Left cardiac atrium (tissue), 4 donors: ENCODE measurements at regions of chr20 and their contacts with region 1.

Region 1: GRCh38 chr20:63009045-63009961 is 2.5 kb upstream of the BHLHE23 start:
- DNase-seq: peak; percentile 77
- ATAC-seq: peak; percentile 87 to 90

Region 2: GRCh38 chr20:62873280-62873679 is 136.0 kb before region 1 on chr20:
- intact Hi-C with region 1: loop called in 1 of 2 experiments (anchors 1 kb)
- DNase-seq: no peak
- ATAC-seq: no peak

Region 3: DNA sequence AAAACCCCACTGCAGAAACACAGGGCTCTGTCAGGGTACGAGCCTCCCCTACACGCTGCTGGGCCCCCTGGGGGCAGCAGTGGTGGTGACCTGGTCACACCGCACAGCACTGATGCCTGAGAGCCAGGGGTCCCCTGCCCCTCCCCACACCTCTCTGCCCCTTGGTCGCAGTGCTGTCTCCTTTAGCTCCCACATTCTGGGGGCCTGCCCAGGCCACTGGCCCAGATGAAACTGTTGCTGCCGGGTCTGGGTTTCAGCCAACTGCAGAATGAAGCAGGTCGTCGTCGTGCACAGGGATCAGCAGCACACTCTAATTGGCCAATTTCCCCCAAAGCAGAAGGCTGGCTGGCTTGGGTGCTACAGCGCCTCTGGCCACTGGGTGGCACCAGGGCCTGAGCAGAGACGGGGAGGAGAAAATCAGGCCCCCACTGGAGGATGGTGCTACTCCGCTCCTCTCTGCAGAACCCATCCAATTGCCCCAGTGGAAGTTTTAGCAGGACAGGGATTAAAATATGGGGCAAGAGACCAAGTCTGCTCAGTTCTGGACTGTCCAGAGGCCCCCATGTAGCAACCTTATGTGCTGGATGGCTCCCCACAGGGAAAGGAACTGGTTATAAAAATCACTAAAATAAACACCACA is 109.1 kb before region 1 on chr20:
- intact Hi-C with region 1: loop called in 1 of 2 experiments (anchors 1 kb)
- DNase-seq: peak; percentile 73
- ATAC-seq: peak; percentile 92 to 96

Region 4: GRCh38 chr20:62972270-62973032 is 36.9 kb before region 1 on chr20:
- intact Hi-C with region 1: loop called in 1 of 2 experiments (anchors 1 kb)
- DNase-seq: peak; percentile 90
- ATAC-seq: peak; percentile 90 to 95